Motor neuron (in vitro differentiated cells): ENCODE measurements at regions of chr17 and their contacts with region 1.

Region 1: DNA sequence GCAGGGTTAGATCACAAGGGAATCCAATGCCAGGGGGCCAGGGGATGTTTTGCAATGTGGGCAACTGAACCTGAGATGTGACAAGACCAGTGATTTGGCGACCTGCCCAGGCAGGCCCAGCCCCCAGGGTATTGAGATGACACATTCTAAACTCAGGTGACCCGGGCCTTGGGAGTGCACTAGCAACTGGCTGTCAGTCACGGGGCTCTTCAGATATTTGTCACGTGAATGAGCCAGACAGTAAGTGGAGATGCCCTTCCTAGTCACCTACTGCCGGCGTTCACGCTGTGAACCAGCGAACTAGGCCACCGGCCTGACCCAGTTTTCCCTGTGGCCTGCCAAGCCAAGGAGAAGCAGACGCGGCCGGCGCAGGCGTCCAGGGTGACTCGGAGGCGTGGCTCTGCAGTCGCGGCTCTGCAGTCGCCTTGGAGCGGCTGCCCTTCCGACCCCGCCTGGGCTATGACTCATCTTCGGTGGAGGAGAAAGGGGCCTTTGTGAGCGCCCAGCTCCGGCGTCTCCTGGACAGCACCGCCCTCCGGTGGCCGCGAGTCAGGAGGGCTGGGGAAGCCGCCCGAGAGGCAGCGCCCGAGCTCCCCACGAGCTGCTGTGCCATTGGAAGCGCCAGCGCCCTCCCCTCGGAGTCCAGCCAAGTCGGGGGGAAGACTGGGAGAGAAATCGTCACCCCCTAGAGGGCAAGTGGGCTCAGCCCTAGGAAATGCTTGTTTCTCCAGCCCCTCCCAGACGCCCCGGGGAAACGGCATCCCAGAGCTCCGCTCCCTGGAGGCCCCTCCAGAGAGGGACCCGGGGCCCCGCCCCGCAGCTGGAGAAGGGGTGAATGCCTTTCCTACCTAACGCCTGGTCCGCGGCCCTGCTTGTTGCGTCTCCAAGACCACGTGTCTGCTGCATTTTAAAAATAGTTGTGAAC is 38.8 kb downstream of the WSB1 start:
- ATAC-seq: peak; percentile 87 to 97 (median 90)
- H3K4me3 ChIP-seq: peak overlapping the region; percentile 20 to 40 (median 27)
- H3K27ac ChIP-seq: peak overlapping the region; percentile 78 to 89
- H3K4me1 ChIP-seq: peaks cover 11 to 21% of the 10 kb centered on the region in 2 donors

Region 2: DNA sequence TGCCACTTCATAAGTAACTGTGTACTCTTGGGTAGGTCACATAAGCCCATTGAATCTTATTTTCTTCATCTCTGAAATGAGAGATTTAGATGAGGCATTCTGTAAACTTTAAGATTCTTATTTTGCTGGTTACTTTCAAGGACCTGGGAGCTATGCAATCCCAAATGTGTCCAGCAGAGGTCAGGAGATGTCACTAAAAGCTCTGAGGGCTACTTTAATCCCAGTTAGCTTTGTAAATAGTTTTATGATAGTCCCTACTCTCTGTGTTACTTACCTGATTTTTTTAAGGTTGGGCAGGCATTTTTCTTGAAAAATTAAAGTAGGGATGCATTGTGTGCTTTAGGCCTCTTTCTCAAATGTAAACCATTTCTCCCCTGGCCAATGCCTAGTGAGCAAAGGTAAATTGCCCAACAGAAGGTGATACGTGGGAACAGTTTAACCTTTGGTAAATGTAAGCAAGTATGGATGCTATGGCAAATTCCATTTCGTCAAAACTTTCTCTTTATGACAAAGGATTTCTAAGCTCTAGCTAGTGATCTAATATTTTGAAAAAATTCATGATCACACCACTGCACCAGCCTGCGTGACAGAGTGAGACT is 95.9 kb before region 1 on chr17:
- in situ Hi-C with region 1: loop called in 3 of 9 experiments (anchors 5 to 25 kb)
- ATAC-seq: peak; percentile 57 to 80 (median 67)
- H3K4me3 ChIP-seq: no peak overlapping the region
- H3K27ac ChIP-seq: no peak overlapping the region
- H3K4me1 ChIP-seq: peaks cover 0 to 5% of the 10 kb centered on the region in 2 donors